CD8-positive, alpha-beta T cell (primary cell): ENCODE measurements at regions of chr12 and their contacts with region 1.

Region 1: DNA sequence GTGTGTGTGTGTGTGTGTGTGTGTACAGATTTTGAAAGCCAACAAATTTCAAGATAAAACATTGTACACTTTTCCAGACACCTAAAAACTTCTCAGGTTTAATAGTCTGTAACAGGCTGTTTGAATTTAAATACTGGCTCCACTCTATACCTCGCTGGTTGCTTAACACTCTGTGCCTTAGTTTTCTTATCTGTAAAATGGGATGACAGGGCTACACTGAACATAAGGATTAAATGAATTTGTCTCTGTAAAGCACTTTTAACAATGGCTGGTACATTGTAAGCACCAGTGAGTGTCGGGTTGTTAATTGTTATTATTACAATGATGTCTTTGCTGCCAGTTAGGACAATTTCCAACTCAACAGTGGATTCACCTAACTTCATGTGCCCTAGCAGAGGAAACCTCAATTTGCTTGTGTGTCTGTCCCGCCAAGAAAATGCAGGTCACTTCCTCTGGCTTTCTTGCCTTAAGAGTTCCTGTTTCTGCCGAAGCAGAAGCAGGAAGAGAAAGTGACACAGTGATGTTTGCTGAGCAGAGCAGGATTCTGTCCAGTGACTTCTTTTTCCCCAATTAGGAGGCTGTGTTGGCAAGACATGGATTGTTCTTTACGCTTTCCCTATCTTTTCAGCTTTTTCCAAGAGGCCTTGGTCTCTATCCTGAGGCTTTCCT is 154.0 kb upstream of the ATP2B1 start:
- DNase-seq: peak in 7 of 9 experiments; percentile 27 to 82 (median 50)
- ATAC-seq: peak; percentile 30
- H3K4me3 ChIP-seq: peak overlapping the region; percentile 29 to 46
- H3K4me3 Mint-ChIP-seq: peak overlapping the region; percentile 80
- H3K27ac ChIP-seq: peak overlapping the region; percentile 79 to 88
- H3K27ac Mint-ChIP-seq: peak overlapping the region; percentile 93
- H3K4me1 ChIP-seq: peaks cover 36% of the 10 kb centered on the region
- H3K4me1 Mint-ChIP-seq: peaks cover 54% of the 10 kb centered on the region
- H3K27me3 ChIP-seq: no peaks in the 10 kb centered on the region
- H3K27me3 Mint-ChIP-seq: no peaks in the 10 kb centered on the region
- CTCF ChIP-seq: no peak

Region 2: DNA sequence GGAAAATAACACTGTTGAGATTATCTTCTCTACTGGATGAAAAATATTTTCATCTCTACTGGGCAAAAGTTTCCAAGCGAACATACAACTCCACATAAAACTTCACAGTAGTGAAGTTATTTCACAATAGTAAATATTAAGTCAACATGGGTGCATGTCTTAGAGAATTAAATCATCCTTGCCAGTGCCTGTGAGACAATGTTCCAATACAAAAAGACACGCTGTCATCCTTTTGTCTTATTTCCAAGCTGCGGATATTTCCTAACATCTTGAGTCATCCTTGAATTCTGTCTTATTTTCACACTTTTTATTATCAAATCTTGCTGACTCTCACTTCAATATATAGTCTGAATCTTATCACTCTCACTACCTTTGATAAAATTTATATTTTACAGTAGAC is 1139.4 kb before region 1 on chr12:
- CTCF ChIA-PET with region 1: no interaction called
- POLR2A ChIA-PET with region 1: no interaction called
- intact Hi-C with region 1: no loop called
- DNase-seq: no peak
- ATAC-seq: no peak
- H3K4me3 ChIP-seq: no peak overlapping the region
- H3K4me3 Mint-ChIP-seq: no peak overlapping the region
- H3K27ac ChIP-seq: no peak overlapping the region
- H3K27ac Mint-ChIP-seq: no peak overlapping the region
- H3K4me1 ChIP-seq: no peaks in the 10 kb centered on the region
- H3K4me1 Mint-ChIP-seq: no peaks in the 10 kb centered on the region
- H3K27me3 ChIP-seq: no peaks in the 10 kb centered on the region
- H3K27me3 Mint-ChIP-seq: no peaks in the 10 kb centered on the region
- CTCF ChIP-seq: no peak

Region 3: GRCh38 chr12:89524541-89525285 is 337.9 kb before region 1 on chr12 and contains the start of gene GALNT4:
- CTCF ChIA-PET with region 1: interaction called, 3 read pairs
- POLR2A ChIA-PET with region 1: no interaction called
- intact Hi-C with region 1: loop called in 1 of 2 experiments (anchors 5 kb)
- DNase-seq: peak; percentile 45 to 88 (median 74)
- ATAC-seq: peak; percentile 70
- H3K4me3 ChIP-seq: peak within 1 kb of the TSS; percentile 78 to 93
- H3K4me3 Mint-ChIP-seq: peak within 1 kb of the TSS; percentile 92
- H3K27ac ChIP-seq: peak within 1 kb of the TSS; percentile 70 to 86
- H3K27ac Mint-ChIP-seq: peak within 1 kb of the TSS; percentile 87
- H3K4me1 ChIP-seq: peaks cover 28% of the 10 kb centered on the region
- H3K4me1 Mint-ChIP-seq: peaks cover 61% of the 10 kb centered on the region
- H3K27me3 ChIP-seq: no peaks in the 10 kb centered on the region
- H3K27me3 Mint-ChIP-seq: no peaks in the 10 kb centered on the region
- CTCF ChIP-seq: peak; percentile 41
- total RNA-seq, gene GALNT4: 4.6 to 5.3 TPM

Region 4: DNA sequence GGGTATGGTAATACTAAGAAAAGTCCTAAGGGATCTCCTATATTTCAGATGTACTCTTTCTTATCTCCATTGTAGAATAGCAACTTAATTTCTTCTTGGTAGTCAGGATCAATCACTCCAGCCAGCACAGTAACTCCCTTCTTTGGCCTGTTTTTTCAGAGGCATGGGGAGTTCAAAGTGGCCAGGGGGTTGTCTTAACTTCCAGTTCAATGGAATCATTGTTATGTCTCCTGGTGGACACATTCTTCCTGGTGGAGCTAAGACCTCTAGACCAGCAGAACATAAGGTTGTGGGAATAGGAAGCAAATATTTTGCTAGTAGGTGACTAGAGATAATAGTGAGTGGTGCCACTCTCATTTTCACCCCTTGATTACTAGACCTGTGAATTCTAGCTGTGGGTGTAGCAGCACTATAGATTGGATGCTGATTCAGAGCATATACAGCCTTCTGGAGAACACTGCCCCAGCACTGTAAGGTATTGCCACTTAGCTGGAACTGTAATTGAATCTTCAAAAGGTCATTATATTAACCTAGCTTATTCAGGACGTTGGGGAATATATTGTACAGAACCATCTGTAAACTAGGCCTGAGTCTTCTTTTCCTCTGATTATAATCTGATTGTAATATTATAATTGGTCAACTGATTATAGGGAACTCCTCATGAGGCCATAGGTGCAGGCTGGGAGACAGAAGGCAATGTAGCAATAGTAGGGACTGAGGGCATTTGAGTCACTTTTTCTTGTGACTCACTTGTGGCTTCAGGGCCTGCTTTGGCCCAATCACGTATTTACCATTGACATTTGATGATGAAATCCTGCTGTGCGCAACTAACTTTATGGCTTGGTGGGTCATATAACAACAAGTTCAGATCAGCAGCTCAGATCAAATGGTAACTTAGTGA is 93.8 kb before region 1 on chr12:
- CTCF ChIA-PET with region 1: no interaction called
- POLR2A ChIA-PET with region 1: no interaction called
- intact Hi-C with region 1: loop called in 1 of 2 experiments (anchors 5 kb)
- DNase-seq: peak in 1 of 9 experiments; percentile 41
- ATAC-seq: no peak
- H3K4me3 ChIP-seq: no peak overlapping the region
- H3K4me3 Mint-ChIP-seq: no peak overlapping the region
- H3K27ac ChIP-seq: no peak overlapping the region
- H3K27ac Mint-ChIP-seq: no peak overlapping the region
- H3K4me1 ChIP-seq: peaks cover 9% of the 10 kb centered on the region
- H3K4me1 Mint-ChIP-seq: peaks cover 35% of the 10 kb centered on the region
- H3K27me3 ChIP-seq: no peaks in the 10 kb centered on the region
- H3K27me3 Mint-ChIP-seq: no peaks in the 10 kb centered on the region
- CTCF ChIP-seq: no peak

Region 5: GRCh38 chr12:89901906-89902642 is 39.4 kb after region 1 on chr12:
- CTCF ChIA-PET with region 1: no interaction called
- POLR2A ChIA-PET with region 1: interaction called, 10 read pairs
- intact Hi-C with region 1: no loop called
- DNase-seq: no peak
- ATAC-seq: no peak
- H3K4me3 ChIP-seq: no peak overlapping the region
- H3K4me3 Mint-ChIP-seq: no peak overlapping the region
- H3K27ac ChIP-seq: no peak overlapping the region
- H3K27ac Mint-ChIP-seq: no peak overlapping the region
- H3K4me1 ChIP-seq: no peaks in the 10 kb centered on the region
- H3K4me1 Mint-ChIP-seq: no peaks in the 10 kb centered on the region
- H3K27me3 ChIP-seq: no peaks in the 10 kb centered on the region
- H3K27me3 Mint-ChIP-seq: no peaks in the 10 kb centered on the region
- CTCF ChIP-seq: no peak

Region 6: DNA sequence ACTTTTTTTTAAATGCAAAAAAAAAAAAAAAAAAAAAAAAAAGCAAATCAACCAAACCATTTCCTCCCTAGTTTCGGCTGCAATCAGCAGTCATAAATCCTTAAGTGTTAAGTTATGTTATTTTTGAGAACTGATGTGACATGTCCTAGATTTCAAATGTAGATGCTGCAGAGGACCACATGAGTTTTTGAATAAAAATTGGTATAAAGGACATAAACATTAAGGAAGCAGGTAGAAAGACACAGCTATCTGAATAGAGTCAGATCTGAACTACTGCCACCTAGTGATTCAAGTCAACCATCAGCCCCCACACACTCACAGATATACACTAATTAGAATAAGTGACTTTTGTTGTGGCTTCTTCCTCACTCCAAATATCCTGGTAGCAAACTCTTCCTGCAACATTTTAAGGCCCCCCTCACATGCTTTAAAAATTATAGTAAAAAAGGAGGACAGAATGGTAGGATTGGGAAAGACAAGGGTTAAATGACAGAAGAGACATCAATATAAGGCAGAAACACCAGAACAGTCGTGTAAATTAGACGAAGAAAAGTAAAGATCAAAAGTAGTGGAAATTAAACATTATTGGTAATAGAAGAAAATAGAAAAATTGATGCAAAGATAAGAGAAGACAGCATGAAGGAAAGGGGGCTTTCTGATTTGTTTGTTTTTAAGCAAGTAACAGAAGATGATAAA is 240.5 kb after region 1 on chr12:
- CTCF ChIA-PET with region 1: no interaction called
- POLR2A ChIA-PET with region 1: no interaction called
- intact Hi-C with region 1: loop called in 1 of 2 experiments (anchors 5 kb)
- DNase-seq: peak in 3 of 9 experiments; percentile 6 to 65 (median 53)
- ATAC-seq: peak; percentile 56
- H3K4me3 ChIP-seq: no peak overlapping the region
- H3K4me3 Mint-ChIP-seq: peak overlapping the region; percentile 68
- H3K27ac ChIP-seq: no peak overlapping the region
- H3K27ac Mint-ChIP-seq: no peak overlapping the region
- H3K4me1 ChIP-seq: no peaks in the 10 kb centered on the region
- H3K4me1 Mint-ChIP-seq: peaks cover 4% of the 10 kb centered on the region
- H3K27me3 ChIP-seq: no peaks in the 10 kb centered on the region
- H3K27me3 Mint-ChIP-seq: peaks cover 2% of the 10 kb centered on the region
- CTCF ChIP-seq: peak; percentile 70